Transverse colon (tissue), 4 donors: ENCODE measurements at regions of chr9 and their contacts with region 1.

Region 1: DNA sequence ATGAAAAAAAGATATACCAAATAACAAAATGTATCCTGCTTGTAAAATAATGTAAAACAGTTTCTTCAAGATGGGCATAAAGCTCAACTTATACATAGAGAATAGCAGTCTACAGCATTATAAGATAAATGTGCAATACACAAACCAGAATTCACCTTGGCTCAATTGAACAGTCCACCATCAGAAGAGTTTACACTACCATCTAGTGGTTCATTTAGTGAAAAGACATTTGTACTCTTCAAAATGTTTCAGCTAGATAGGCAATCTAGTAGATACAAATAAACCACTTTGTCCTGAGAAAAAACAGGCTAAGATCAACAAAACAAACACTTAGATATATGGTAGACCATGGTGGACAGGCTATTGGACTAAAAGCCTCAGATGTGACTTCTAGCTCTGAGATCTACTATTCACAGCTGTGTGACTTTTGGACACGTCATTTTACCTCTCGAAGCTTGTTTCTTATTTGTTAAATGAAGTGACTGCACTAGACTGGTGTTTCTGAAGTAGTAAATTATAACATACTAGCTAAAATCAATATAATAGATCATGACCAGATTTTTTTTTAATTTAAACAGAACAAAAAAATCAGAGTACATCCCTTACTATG is 22.1 kb upstream of the TPD52L3 start:
- DNase-seq: no peak
- H3K4me3 ChIP-seq: no peak overlapping the region
- H3K27ac ChIP-seq: no peak overlapping the region
- H3K4me1 ChIP-seq: no peaks in the 10 kb centered on the region
- H3K27me3 ChIP-seq: no peaks in the 10 kb centered on the region
- CTCF ChIP-seq: peak; percentile 53 to 70 (median 56)
- EP300 ChIP-seq: no peak
- POLR2A ChIP-seq: no peak

Region 2: GRCh38 chr9:5869315-5870019 is 436.6 kb before region 1 on chr9:
- in situ Hi-C with region 1: no loop called
- intact Hi-C with region 1: no loop called
- DNase-seq: no peak
- H3K4me3 ChIP-seq: no peak overlapping the region
- H3K27ac ChIP-seq: no peak overlapping the region
- H3K4me1 ChIP-seq: no peaks in the 10 kb centered on the region
- H3K27me3 ChIP-seq: no peaks in the 10 kb centered on the region
- CTCF ChIP-seq: peak in 1 of 5 experiments; percentile 12
- EP300 ChIP-seq: no peak
- POLR2A ChIP-seq: no peak

Region 3: GRCh38 chr9:5886114-5886939 is 419.7 kb before region 1 on chr9:
- in situ Hi-C with region 1: loop called in 3 of 4 experiments (anchors 25 kb)
- intact Hi-C with region 1: no loop called
- DNase-seq: peak; percentile 73
- H3K4me3 ChIP-seq: no peak overlapping the region
- H3K27ac ChIP-seq: no peak overlapping the region
- H3K4me1 ChIP-seq: no peaks in the 10 kb centered on the region
- H3K27me3 ChIP-seq: no peaks in the 10 kb centered on the region
- CTCF ChIP-seq: peak; percentile 72 to 88 (median 80)
- EP300 ChIP-seq: no peak
- POLR2A ChIP-seq: no peak

Region 4: GRCh38 chr9:6055213-6055612 is 250.8 kb before region 1 on chr9:
- in situ Hi-C with region 1: loop called (anchors 5 to 25 kb)
- intact Hi-C with region 1: loop called (anchors 5 kb)
- DNase-seq: peak; percentile 22
- H3K4me3 ChIP-seq: no peak overlapping the region
- H3K27ac ChIP-seq: no peak overlapping the region
- H3K4me1 ChIP-seq: no peaks in the 10 kb centered on the region
- H3K27me3 ChIP-seq: no peaks in the 10 kb centered on the region
- CTCF ChIP-seq: peak; percentile 50 to 62 (median 52)
- EP300 ChIP-seq: no peak
- POLR2A ChIP-seq: no peak

Region 5: GRCh38 chr9:6184749-6185645 is 121.1 kb before region 1 on chr9:
- in situ Hi-C with region 1: loop called in 2 of 4 experiments (anchors 10 to 25 kb)
- intact Hi-C with region 1: no loop called
- DNase-seq: no peak
- H3K4me3 ChIP-seq: no peak overlapping the region
- H3K27ac ChIP-seq: no peak overlapping the region
- H3K4me1 ChIP-seq: peaks cover 0 to 4% (median 0%) of the 10 kb centered on the region in 4 donors
- H3K27me3 ChIP-seq: no peaks in the 10 kb centered on the region
- CTCF ChIP-seq: no peak
- EP300 ChIP-seq: no peak
- POLR2A ChIP-seq: no peak

Region 6: DNA sequence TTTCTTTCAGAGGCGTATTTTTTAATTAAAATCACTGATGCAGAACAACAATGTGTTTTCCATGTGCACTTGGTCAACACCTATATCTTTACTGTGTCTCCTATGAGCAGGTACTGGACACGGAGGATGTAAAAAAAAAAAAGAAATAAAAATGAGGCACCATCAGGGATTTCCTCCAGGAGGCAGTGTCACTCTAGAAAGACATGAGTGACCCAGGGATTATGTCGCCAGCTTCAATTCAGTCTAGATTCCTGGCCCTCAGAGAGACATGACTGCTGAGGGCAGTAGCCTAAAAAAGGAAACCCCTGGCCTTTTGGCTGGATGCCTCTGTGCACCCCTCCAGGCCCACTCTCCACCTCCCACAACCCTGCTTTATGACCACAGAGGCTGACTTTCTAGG is 108.7 kb before region 1 on chr9:
- in situ Hi-C with region 1: loop called in 2 of 4 experiments (anchors 10 to 25 kb)
- intact Hi-C with region 1: loop called (anchors 2 kb)
- DNase-seq: no peak
- H3K4me3 ChIP-seq: no peak overlapping the region
- H3K27ac ChIP-seq: no peak overlapping the region
- H3K4me1 ChIP-seq: peaks cover 0 to 11% (median 3%) of the 10 kb centered on the region in 4 donors
- H3K27me3 ChIP-seq: no peaks in the 10 kb centered on the region
- CTCF ChIP-seq: peak; percentile 45 to 61 (median 51)
- EP300 ChIP-seq: no peak
- POLR2A ChIP-seq: no peak